Activated CD8-positive, alpha-beta T cell treated with anti-CD3 and anti-CD28 coated beads, Interleukin-2, amount 10 ng/mL, durations not matched to agents 7 days and 5 days (primary cell): ENCODE measurements at regions of chr21 and their contacts with region 1.

Region 1: GRCh38 chr21:42537106-42537742 is 23.6 kb downstream of the SLC37A1 start:
- DNase-seq: peak; percentile 51
- ATAC-seq: peak; percentile 55
- H3K4me3 Mint-ChIP-seq: no peak overlapping the region
- H3K27ac Mint-ChIP-seq: no peak overlapping the region
- H3K4me1 Mint-ChIP-seq: peaks cover 18% of the 10 kb centered on the region
- H3K27me3 Mint-ChIP-seq: no peaks in the 10 kb centered on the region

Region 2: GRCh38 chr21:42319376-42319775 is 217.8 kb before region 1 on chr21:
- CTCF ChIA-PET with region 1: no interaction called
- POLR2A ChIA-PET with region 1: no interaction called
- DNase-seq: no peak
- ATAC-seq: no peak
- H3K4me3 Mint-ChIP-seq: no peak overlapping the region
- H3K27ac Mint-ChIP-seq: no peak overlapping the region
- H3K4me1 Mint-ChIP-seq: peaks cover 5% of the 10 kb centered on the region
- H3K27me3 Mint-ChIP-seq: peaks cover 1% of the 10 kb centered on the region

Region 3: GRCh38 chr21:42467140-42467983 is 69.9 kb before region 1 on chr21:
- CTCF ChIA-PET with region 1: interaction called, 56 read pairs
- POLR2A ChIA-PET with region 1: no interaction called
- DNase-seq: peak; percentile 65
- ATAC-seq: no peak
- H3K4me3 Mint-ChIP-seq: no peak overlapping the region
- H3K27ac Mint-ChIP-seq: no peak overlapping the region
- H3K4me1 Mint-ChIP-seq: peaks cover 48% of the 10 kb centered on the region
- H3K27me3 Mint-ChIP-seq: peaks cover 4% of the 10 kb centered on the region

Region 4: GRCh38 chr21:42513985-42514882 is 23.0 kb before region 1 on chr21:
- CTCF ChIA-PET with region 1: interaction called, 11 read pairs
- POLR2A ChIA-PET with region 1: interaction called, 3 read pairs
- DNase-seq: peak; percentile 68
- ATAC-seq: peak; percentile 81
- H3K4me3 Mint-ChIP-seq: peak overlapping the region; percentile 81
- H3K27ac Mint-ChIP-seq: peak overlapping the region; percentile 82
- H3K4me1 Mint-ChIP-seq: peaks cover 35% of the 10 kb centered on the region
- H3K27me3 Mint-ChIP-seq: no peaks in the 10 kb centered on the region